CD4-positive, alpha-beta T cell (primary cell): ENCODE measurements at regions of chr19 and their contacts with region 1.

Region 1: DNA sequence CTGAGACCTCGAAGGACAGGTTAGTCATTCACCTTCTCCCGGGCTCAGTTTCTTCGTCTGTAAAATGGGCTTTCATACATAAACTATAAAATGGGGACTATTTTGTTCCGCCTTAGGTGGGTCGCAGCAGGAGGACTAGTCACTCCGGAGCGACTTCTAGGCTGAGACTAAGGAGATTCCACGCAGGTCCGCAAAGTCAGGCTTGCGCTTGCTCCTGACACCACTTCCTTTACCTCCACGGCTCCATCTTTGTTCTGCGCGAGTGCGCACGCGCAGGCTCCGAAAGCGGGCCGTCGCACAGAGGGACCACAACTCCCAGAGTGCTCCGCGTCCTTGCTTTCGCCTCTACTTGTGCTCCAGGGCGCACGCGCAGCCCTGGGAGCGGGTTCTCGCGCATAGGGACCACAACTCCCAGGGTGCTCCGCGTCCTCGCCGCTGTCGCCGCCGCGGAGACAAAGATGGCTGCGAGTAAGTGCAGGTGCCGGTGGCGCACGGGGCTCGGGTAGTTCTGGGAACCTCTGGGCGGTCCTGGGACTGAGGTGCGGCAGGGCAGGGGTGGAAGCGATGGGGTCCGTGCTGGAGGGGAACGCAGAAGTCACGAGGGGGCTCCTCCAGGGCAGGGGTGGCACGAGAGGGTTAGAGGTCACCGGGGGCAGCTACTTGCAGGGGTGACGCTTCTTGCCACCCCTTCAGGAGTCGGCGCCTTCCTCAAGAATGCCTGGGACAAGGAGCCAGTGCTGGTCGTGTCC is at the start of gene NDUFA3:
- DNase-seq: peak; percentile 93 to 100 (median 98)
- ATAC-seq: peak; percentile 99
- H3K4me3 ChIP-seq: peak within 1 kb of the TSS; percentile 98
- H3K4me3 Mint-ChIP-seq: peak within 1 kb of the TSS; percentile 97
- H3K27ac ChIP-seq: peak within 1 kb of the TSS; percentile 37 to 72
- H3K27ac Mint-ChIP-seq: peak within 1 kb of the TSS; percentile 82
- H3K4me1 ChIP-seq: peaks cover 24% of the 10 kb centered on the region
- H3K4me1 Mint-ChIP-seq: peaks cover 23% of the 10 kb centered on the region
- H3K27me3 ChIP-seq: no peaks in the 10 kb centered on the region
- H3K27me3 Mint-ChIP-seq: no peaks in the 10 kb centered on the region
- CTCF ChIP-seq: no peak
- total RNA-seq, gene NDUFA3: 63.0 to 63.5 TPM

Region 2: GRCh38 chr19:53977429-53977990 is 125.1 kb before region 1 on chr19:
- CTCF ChIA-PET with region 1: no interaction called
- POLR2A ChIA-PET with region 1: no interaction called
- intact Hi-C with region 1: loop called in 1 of 2 experiments (anchors 5 kb)
- DNase-seq: peak; percentile 32 to 86 (median 54)
- ATAC-seq: peak; percentile 75
- H3K4me3 ChIP-seq: peak overlapping the region; percentile 51
- H3K4me3 Mint-ChIP-seq: peak overlapping the region; percentile 82
- H3K27ac ChIP-seq: no peak overlapping the region
- H3K27ac Mint-ChIP-seq: no peak overlapping the region
- H3K4me1 ChIP-seq: peaks cover 33% of the 10 kb centered on the region
- H3K4me1 Mint-ChIP-seq: peaks cover 38% of the 10 kb centered on the region
- H3K27me3 ChIP-seq: peaks cover 57 to 58% of the 10 kb centered on the region in 2 experiments
- H3K27me3 Mint-ChIP-seq: peaks cover 78% of the 10 kb centered on the region
- CTCF ChIP-seq: no peak

Region 3: GRCh38 chr19:54047616-54048015 is 55.0 kb before region 1 on chr19:
- CTCF ChIA-PET with region 1: no interaction called
- POLR2A ChIA-PET with region 1: no interaction called
- intact Hi-C with region 1: no loop called
- DNase-seq: peak in 1 of 14 experiments; percentile 28
- ATAC-seq: no peak
- H3K4me3 ChIP-seq: no peak overlapping the region
- H3K4me3 Mint-ChIP-seq: no peak overlapping the region
- H3K27ac ChIP-seq: no peak overlapping the region
- H3K27ac Mint-ChIP-seq: no peak overlapping the region
- H3K4me1 ChIP-seq: no peaks in the 10 kb centered on the region
- H3K4me1 Mint-ChIP-seq: no peaks in the 10 kb centered on the region
- H3K27me3 ChIP-seq: peaks cover 8 to 13% of the 10 kb centered on the region in 2 experiments
- H3K27me3 Mint-ChIP-seq: peaks cover 58% of the 10 kb centered on the region
- CTCF ChIP-seq: no peak